ENCODE measurements at regions of chr14 and their contacts with region 1.

Region 1: DNA sequence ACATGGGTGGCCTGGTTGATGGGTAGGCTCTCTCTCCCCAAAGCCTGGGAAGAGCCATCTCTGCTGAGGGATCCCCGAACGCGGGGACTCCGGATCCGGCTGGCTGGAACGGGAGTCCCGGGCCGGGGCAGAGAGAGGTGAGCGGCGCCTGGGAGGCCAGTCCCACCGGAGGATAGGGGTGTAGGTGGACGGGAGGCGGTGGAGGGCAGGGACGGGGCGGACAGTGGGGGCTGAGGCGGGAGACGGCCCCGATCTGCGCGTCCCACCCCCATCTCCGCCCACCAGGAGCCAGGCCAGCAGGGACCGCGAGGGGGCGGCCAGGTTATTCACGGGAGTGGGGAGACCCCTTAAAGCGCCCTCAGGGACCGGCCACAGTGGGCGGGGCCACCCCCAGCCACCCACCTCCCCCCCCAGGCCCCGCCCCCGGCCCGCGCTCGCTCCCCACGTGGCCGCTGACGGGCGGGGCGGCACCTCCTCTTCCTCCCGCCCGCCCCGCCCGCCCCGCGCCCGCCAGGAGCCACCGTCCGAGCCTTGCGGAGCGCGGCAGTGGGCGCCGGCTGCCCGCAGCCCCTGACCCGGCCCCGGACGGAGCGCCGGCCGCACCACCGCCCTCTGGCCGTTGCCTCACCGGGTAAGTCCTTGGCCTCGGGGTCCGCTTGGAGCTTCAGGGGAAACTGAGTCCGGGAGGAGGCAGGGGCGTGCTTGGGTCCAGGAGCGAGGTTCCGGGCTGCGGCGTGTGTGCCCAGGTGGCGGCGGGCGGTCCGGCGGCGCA is at the start of gene INF2:
- DNase-seq: peak; percentile 79
- ATAC-seq: peak; percentile 81
- H3K4me3 ChIP-seq: peak within 1 kb of the TSS; percentile 31 to 87 (median 70)
- H3K4me3 Mint-ChIP-seq: peak within 1 kb of the TSS; percentile 78
- H3K27ac ChIP-seq: peak within 1 kb of the TSS; percentile 58 to 72
- H3K27ac Mint-ChIP-seq: peak within 1 kb of the TSS; percentile 65
- H3K4me1 ChIP-seq: peaks cover 41 to 85% of the 10 kb centered on the region in 2 donors
- H3K4me1 Mint-ChIP-seq: peaks cover 63% of the 10 kb centered on the region
- H3K27me3 ChIP-seq: no peaks in the 10 kb centered on the region
- H3K27me3 Mint-ChIP-seq: no peaks in the 10 kb centered on the region
- CTCF ChIP-seq: no peak
- total RNA-seq, gene INF2: 90.2 and 94.2 TPM in 2 replicates

Region 2: DNA sequence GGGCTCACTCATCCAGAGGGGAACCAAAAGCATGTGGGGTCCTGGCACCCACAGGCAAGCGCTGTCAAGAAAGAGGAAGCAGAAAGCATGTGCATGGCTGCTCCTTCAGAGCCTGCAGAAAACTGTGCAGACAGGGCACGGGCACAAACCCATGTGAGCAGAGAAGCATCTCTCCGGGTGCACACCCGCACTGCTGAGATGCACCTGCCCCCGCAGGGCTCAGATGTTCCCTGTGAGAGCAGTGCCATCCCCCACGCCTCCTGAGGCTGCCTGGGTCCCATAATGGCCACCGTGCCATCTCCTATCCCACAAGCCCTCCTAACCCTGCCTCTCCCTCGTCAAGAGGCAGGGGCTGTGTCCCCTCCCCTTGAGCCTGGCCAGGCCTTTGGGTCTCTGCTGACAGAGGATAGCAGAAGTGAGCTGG is 32.2 kb before region 1 on chr14:
- CTCF ChIA-PET with region 1: interaction called, 6 read pairs
- POLR2A ChIA-PET with region 1: interaction called, 5 read pairs
- intact Hi-C with region 1: loop called (anchors 2 kb)
- DNase-seq: peak; percentile 94
- ATAC-seq: peak; percentile 62
- H3K4me3 ChIP-seq: peak overlapping the region in 3 of 5 experiments; percentile 25 to 55 (median 32)
- H3K4me3 Mint-ChIP-seq: peak overlapping the region; percentile 84
- H3K27ac ChIP-seq: peak overlapping the region; percentile 98 to 100
- H3K27ac Mint-ChIP-seq: peak overlapping the region; percentile 99
- H3K4me1 ChIP-seq: peaks cover 65 to 74% of the 10 kb centered on the region in 2 donors
- H3K4me1 Mint-ChIP-seq: peaks cover 82% of the 10 kb centered on the region
- H3K27me3 ChIP-seq: no peaks in the 10 kb centered on the region
- H3K27me3 Mint-ChIP-seq: no peaks in the 10 kb centered on the region
- CTCF ChIP-seq: no peak

Measured in B cell (primary cell).